ENCODE measurements at regions of chr3 and their contacts with region 1.

Region 1: GRCh38 chr3:112013058-112013783 is 14.5 kb downstream of the TAGLN3 start:
- DNase-seq: peak; percentile 75
- H3K4me3 Mint-ChIP-seq: no peak overlapping the region
- H3K27ac Mint-ChIP-seq: no peak overlapping the region
- H3K4me1 Mint-ChIP-seq: peaks cover 17% of the 10 kb centered on the region
- H3K27me3 Mint-ChIP-seq: no peaks in the 10 kb centered on the region

Region 2: DNA sequence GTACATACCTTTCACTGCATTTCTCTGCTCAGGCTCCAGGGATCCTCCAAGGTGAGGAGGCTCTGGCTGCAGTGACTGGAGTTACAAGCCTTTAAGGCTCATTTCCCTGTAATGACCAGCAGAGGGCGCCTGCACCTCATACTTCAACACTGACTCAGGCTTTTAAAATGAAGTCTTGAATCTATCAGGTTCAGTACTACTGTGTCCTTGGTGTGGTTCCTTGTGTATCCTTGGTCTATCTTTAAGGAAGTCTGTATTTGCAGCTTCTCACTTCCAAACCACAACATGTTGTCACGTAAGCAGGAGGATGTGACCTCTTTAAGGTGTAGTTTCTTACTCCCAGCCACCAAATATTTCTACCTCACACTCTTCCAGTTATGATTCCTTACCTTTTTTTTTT is 295.6 kb before region 1 on chr3:
- CTCF ChIA-PET with region 1: interaction called, 87 read pairs
- POLR2A ChIA-PET with region 1: no interaction called
- DNase-seq: peak; percentile 74
- H3K4me3 Mint-ChIP-seq: no peak overlapping the region
- H3K27ac Mint-ChIP-seq: peak overlapping the region; percentile 1
- H3K4me1 Mint-ChIP-seq: peaks cover 3% of the 10 kb centered on the region
- H3K27me3 Mint-ChIP-seq: no peaks in the 10 kb centered on the region

Region 3: GRCh38 chr3:111989061-111989678 is 24.1 kb before region 1 on chr3:
- CTCF ChIA-PET with region 1: interaction called, 202 read pairs
- POLR2A ChIA-PET with region 1: interaction called, 7 read pairs
- DNase-seq: no peak
- H3K4me3 Mint-ChIP-seq: no peak overlapping the region
- H3K27ac Mint-ChIP-seq: no peak overlapping the region
- H3K4me1 Mint-ChIP-seq: peaks cover 31% of the 10 kb centered on the region
- H3K27me3 Mint-ChIP-seq: no peaks in the 10 kb centered on the region

Region 4: DNA sequence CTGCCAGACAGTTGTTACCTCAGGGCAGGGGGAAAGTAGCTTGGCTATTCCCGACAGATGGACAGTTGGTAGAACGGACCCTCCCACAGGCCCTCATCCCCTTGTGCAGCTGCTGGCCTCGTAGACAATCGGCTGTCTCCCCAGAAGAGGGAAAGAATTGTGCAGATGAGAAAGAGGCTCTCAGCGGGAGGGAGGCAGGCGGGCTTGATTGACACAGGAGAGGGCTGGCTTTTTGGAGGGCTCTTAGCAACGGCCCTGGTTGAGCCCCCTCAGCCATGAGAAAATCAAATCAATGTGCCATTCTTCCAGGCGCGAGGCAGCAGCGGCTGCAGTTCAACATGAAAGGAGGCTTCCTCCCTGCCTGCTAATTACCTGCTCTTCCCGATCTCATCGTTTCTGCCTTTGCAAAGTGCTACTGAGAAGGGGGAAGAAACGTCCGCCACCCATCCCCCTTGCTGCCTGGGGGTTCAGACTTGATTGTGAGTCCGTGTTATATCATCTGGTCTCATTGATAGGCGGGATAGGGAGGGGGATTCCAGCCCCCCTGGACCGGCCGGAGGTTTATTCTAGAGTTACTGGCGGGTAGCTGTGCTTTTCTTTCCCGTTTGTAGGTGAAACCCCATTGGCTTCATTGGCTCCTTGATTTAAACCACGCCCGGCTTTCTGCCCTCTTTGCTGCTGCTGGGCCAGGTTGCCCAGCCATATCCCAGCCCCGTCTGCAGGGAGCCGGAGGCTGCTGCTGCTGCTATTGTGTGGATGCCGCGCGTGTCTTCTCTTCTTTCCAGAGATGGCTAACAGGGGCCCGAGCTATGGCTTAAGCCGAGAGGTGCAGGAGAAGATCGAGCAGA is 14.4 kb before region 1 on chr3 and contains the start of gene TAGLN3:
- CTCF ChIA-PET with region 1: interaction called, 202 read pairs
- POLR2A ChIA-PET with region 1: interaction called, 3 read pairs
- DNase-seq: no peak
- H3K4me3 Mint-ChIP-seq: peak within 1 kb of the TSS; percentile 39
- H3K27ac Mint-ChIP-seq: no peak within 1 kb of the TSS
- H3K4me1 Mint-ChIP-seq: peaks cover 19% of the 10 kb centered on the region
- H3K27me3 Mint-ChIP-seq: no peaks in the 10 kb centered on the region
- total RNA-seq, gene TAGLN3: 0.18 TPM in 1 of 2 experiments, not detected in the other

Region 5: DNA sequence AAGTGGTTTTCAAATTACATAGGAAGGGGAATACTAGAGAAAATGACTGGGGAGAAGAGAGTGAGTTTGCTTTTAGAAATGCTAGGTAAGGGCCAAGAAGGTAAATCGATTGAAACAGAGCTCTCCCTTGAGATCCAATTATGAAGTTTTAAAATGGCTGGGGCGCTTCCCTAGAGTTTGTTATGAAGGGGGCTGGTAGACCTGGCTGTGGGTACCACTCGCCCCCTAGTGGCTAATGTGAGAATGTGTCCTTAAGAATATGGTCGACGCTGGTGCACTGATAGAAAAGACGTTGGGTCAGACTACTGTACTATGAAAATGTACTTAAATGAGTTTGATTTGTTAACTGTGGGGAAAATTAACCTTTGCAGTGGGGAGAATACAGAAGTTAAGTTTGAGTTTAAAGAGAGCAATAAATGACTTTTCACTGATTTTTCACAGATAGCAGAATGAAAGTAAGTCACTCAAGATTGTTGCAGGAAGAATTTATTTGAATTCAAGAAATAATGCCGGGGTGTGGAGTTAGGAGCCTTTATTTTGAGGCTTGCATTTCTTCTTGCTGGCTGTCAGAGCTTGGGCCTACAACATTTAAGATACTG is 30.5 kb after region 1 on chr3:
- CTCF ChIA-PET with region 1: interaction called, 13 read pairs
- POLR2A ChIA-PET with region 1: interaction called, 5 read pairs
- DNase-seq: peak; percentile 48
- H3K4me3 Mint-ChIP-seq: no peak overlapping the region
- H3K27ac Mint-ChIP-seq: no peak overlapping the region
- H3K4me1 Mint-ChIP-seq: peaks cover 4% of the 10 kb centered on the region
- H3K27me3 Mint-ChIP-seq: peaks cover 2% of the 10 kb centered on the region

Region 6: GRCh38 chr3:112074721-112075497 is 61.7 kb after region 1 on chr3:
- CTCF ChIA-PET with region 1: no interaction called
- POLR2A ChIA-PET with region 1: no interaction called
- DNase-seq: peak; percentile 52
- H3K4me3 Mint-ChIP-seq: peak overlapping the region; percentile 42
- H3K27ac Mint-ChIP-seq: peak overlapping the region; percentile 40
- H3K4me1 Mint-ChIP-seq: peaks cover 46% of the 10 kb centered on the region
- H3K27me3 Mint-ChIP-seq: peaks cover 2% of the 10 kb centered on the region